PC-3 (cell line): ENCODE measurements at regions of chr11 and their contacts with region 1.

Region 1: GRCh38 chr11:101497291-101497690 is 86.5 kb downstream of the TRPC6 start:
- DNase-seq: no peak
- ATAC-seq: no peak
- H3K4me3 ChIP-seq: no peak overlapping the region
- H3K27ac ChIP-seq: no peak overlapping the region
- H3K4me1 ChIP-seq: no peaks in the 10 kb centered on the region
- H3K27me3 ChIP-seq: peaks cover 10% of the 10 kb centered on the region; the same call in 1 of the 2 replicates
- CTCF ChIP-seq: no peak

Region 2: GRCh38 chr11:101470419-101470818 is 26.9 kb before region 1 on chr11:
- CTCF ChIA-PET with region 1: no interaction called
- POLR2A ChIA-PET with region 1: interaction called, 23 read pairs
- intact Hi-C with region 1: no loop called
- DNase-seq: no peak
- ATAC-seq: no peak
- H3K4me3 ChIP-seq: no peak overlapping the region
- H3K27ac ChIP-seq: no peak overlapping the region
- H3K4me1 ChIP-seq: peaks cover 5% of the 10 kb centered on the region
- H3K27me3 ChIP-seq: no peaks in the 10 kb centered on the region
- CTCF ChIP-seq: no peak